ENCODE measurements at regions of chr10 and their contacts with region 1.

Region 1: DNA sequence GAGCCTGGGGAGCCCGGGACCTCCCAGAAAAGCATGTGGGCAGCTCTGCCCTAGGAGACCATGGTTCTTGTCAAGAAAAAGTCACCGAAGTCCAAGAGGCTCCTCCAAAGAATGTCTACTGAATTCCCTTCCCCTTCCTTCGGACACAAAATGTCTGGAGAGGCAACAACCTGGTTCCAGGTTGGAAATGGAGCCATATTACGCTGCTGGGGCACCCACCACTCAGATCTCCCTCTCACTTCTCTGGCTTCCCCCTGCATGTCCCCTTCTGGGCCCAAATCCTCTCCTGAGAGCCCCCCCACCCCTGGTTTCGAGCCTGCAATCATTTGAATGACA is 52.6 kb downstream of the RGS10 start:
- DNase-seq: no peak
- H3K4me3 Mint-ChIP-seq: peak overlapping the region; percentile 34
- H3K27ac Mint-ChIP-seq: peak overlapping the region; percentile 89
- H3K4me1 Mint-ChIP-seq: peaks cover 38% of the 10 kb centered on the region
- H3K27me3 Mint-ChIP-seq: no peaks in the 10 kb centered on the region

Region 2: GRCh38 chr10:119445311-119445934 is 44.5 kb before region 1 on chr10:
- intact Hi-C with region 1: loop called (anchors 5 kb)
- DNase-seq: peak; percentile 71
- H3K4me3 Mint-ChIP-seq: no peak overlapping the region
- H3K27ac Mint-ChIP-seq: no peak overlapping the region
- H3K4me1 Mint-ChIP-seq: peaks cover 3% of the 10 kb centered on the region
- H3K27me3 Mint-ChIP-seq: no peaks in the 10 kb centered on the region

Measured in activated T-helper 1 cell treated with anti-CD3 and anti-CD28 coated beads, Interleukin-12 subunit alpha, Interleukin-12 subunit beta, Interleukin-2, Interleukin-4 antibody, amounts not matched to agents 30 ng/mL and 10 ng/mL and 1 ng/mL, durations not matched to agents 14 hours and 24 hours and 36 hours (primary cell).